Motor neuron (in vitro differentiated cells): ENCODE measurements at regions of chr7 and their contacts with region 1.

Region 1: DNA sequence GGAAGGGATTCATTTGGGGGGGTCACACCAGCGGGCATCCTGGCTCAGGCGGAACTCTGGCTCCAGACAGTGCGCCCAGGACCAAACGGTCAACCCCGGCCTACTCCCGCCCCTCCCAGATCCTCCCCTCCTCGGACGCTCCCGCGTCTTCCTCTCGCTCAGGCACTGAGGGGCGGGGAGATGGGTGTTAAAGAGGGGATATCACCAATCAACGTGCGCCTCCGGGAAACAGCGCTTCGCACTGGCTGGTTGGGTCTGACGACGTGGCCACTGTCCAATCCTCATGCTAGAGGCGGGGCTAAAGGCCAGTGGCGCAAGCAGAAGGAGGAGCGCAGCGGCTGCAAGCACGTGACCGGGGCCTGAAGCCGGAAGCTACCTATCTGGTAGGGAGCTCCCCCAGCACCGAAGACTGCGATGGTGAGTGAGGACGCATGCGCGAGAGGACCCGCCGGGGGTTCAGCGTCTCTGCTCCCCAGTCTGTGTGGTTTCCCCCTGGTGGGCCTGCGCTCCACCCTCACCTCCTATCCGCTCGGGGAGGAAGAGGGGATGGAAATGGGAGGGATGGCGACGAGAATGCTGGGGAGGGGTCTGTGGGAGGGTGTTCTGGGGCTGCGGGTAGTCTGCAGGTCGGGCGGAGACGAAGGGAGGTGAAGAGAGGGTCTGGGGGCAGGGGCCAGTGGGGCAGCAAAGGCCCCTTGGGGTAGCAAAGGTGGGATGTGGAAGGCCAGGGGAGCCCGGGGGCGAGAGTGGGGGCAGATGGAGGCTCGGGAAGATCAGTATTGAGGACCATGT is at the start of gene LAMTOR4:
- ATAC-seq: peak; percentile 97 to 98 (median 98)
- H3K4me3 ChIP-seq: peak within 1 kb of the TSS; percentile 68 to 90 (median 73)
- H3K27ac ChIP-seq: peak within 1 kb of the TSS; percentile 78 to 80
- H3K4me1 ChIP-seq: peaks cover 7 to 9% of the 10 kb centered on the region in 2 donors
- total RNA-seq, gene LAMTOR4: 74.0 to 145 (median 111) TPM

Region 2: DNA sequence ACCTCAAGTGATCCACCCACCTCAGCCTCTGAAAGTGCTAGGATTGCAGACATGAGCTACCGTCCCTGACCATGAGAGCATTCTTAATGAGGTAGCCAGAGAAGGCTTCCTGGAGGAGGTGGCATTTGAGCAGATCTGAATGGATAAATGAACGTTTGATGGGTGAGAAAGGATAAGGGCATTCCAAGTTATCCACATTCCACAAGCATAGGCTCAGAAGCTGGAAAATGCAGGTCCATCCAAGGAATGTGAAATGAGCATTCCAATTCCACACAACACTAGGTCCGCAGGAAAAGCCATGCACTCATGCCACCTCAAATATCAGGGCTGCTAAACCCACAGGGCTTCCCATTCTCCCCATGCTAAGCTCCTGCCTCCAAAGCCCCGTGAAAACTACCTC is 1295.9 kb before region 1 on chr7:
- in situ Hi-C with region 1: no loop called
- ATAC-seq: no peak
- H3K4me3 ChIP-seq: no peak overlapping the region
- H3K27ac ChIP-seq: no peak overlapping the region
- H3K4me1 ChIP-seq: no peaks in the 10 kb centered on the region

Region 3: DNA sequence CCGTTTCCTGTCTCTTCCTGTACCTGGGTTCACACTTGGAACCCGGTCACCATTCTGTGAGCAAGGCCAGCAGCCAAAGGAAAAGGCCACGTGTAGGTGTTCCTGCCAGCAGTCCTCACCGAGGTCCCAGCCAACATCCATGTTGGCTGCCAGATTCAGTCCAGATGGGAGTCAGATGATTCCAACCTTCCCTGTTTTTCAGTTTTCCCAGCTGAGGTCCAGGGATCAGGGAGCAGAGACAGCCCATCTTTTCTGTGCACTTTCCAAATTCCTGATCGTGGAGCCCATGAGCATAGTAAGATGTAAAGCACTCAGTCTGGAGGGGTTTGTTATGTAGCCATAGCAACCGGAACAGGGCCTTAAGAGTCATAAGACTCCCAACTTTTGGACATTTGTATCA is 67.1 kb after region 1 on chr7:
- in situ Hi-C with region 1: loop called in 1 of 9 experiments (anchors 10 kb)
- ATAC-seq: no peak
- H3K4me3 ChIP-seq: no peak overlapping the region
- H3K27ac ChIP-seq: no peak overlapping the region
- H3K4me1 ChIP-seq: peaks cover 0 to 5% of the 10 kb centered on the region in 2 donors